Left cardiac atrium (tissue), 4 donors: ENCODE measurements at regions of chr5 and their contacts with region 1.

Region 1: DNA sequence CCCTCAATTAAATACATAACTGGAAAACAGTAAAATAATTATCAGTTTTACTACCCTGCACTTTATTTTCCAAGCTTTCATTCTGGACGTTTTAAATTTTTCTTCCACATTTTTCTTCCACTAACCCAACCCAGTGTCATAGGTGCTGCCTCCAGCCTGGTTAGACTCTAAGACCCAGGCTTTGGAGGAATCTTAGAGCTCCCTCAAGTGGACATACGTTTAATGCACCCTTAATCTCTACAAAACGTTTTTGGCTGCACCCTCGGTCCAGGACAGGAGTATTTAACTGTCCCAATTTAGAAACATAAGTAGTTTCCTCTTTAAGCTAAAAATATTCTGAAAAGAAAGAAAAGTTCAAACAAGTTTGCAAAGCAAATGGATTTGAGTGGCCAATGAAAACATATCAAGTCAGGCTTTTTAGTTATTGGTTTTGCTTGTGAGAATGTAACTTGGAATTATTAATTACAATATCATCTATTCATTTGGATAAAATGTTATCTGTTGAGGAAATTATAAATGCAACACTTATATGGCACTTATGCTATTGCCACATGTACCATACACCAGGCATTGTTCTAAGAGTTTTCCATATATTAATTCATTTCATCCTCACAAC is 38.9 kb downstream of the CDH6 start:
- DNase-seq: no peak
- ATAC-seq: peak; percentile 93

Region 2: GRCh38 chr5:30401479-30402058 is 830.8 kb before region 1 on chr5:
- intact Hi-C with region 1: loop called in 1 of 2 experiments (anchors 2 kb)
- DNase-seq: peak; percentile 26
- ATAC-seq: no peak